ENCODE measurements at regions of chr14 and their contacts with region 1.

Region 1: DNA sequence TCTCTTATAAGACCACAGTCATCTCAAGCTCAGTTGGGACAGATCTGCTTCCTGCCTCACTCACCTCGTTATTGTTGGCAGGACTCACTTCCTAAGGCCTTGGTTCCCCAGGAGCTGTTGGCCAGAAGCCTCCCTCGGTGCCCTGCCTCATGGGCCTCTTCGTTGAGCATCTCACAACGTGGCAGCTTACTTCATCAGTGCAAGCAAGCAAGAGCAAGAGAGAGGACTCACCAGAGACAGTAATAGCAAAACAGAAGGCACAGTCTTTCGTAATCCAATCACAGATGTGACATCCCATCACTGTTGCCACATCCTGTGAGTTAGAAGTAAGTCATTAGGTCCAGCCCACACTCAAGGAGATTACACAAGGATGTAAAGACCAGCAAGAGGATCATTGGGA is 5.1 kb upstream of the NUMB start:
- DNase-seq: peak; percentile 73
- ATAC-seq: peak; percentile 56
- H3K4me3 Mint-ChIP-seq: peak overlapping the region; percentile 53
- H3K27ac Mint-ChIP-seq: peak overlapping the region; percentile 94
- H3K4me1 Mint-ChIP-seq: peaks cover 63% of the 10 kb centered on the region
- H3K27me3 Mint-ChIP-seq: no peaks in the 10 kb centered on the region

Region 2: DNA sequence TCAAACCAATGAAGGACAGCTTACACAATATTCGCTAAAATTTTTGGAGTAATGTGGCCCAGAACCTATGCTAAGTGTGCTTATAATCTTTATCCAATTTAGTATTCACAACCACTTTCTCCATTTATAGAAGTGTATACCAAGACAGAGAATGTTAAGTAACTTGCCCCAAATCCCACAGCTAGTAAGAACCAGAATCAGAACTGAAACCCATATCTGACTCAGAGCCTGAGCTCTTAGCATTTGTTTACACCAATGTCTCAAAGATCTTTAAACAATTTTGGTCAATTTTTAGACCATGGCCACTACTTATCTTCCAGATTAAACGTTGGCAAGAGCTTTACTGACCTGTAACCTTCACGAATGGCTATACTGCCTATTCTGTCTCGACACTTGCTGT is 173.1 kb before region 1 on chr14:
- CTCF ChIA-PET with region 1: interaction called, 12 read pairs
- POLR2A ChIA-PET with region 1: interaction called, 4 read pairs
- intact Hi-C with region 1: loop called in 1 of 2 experiments (anchors 1 kb)
- DNase-seq: no peak
- ATAC-seq: peak; percentile 75
- H3K4me3 Mint-ChIP-seq: no peak overlapping the region
- H3K27ac Mint-ChIP-seq: no peak overlapping the region
- H3K4me1 Mint-ChIP-seq: peaks cover 31% of the 10 kb centered on the region
- H3K27me3 Mint-ChIP-seq: no peaks in the 10 kb centered on the region

Region 3: GRCh38 chr14:73392329-73393257 is 70.8 kb before region 1 on chr14:
- CTCF ChIA-PET with region 1: no interaction called
- POLR2A ChIA-PET with region 1: no interaction called
- intact Hi-C with region 1: loop called in 1 of 2 experiments (anchors 5 kb)
- DNase-seq: no peak
- ATAC-seq: peak; percentile 93
- H3K4me3 Mint-ChIP-seq: no peak overlapping the region
- H3K27ac Mint-ChIP-seq: no peak overlapping the region
- H3K4me1 Mint-ChIP-seq: peaks cover 19% of the 10 kb centered on the region
- H3K27me3 Mint-ChIP-seq: no peaks in the 10 kb centered on the region